AG04449 (cell line): ENCODE measurements at regions of chr2 and their contacts with region 1.

Region 1: DNA sequence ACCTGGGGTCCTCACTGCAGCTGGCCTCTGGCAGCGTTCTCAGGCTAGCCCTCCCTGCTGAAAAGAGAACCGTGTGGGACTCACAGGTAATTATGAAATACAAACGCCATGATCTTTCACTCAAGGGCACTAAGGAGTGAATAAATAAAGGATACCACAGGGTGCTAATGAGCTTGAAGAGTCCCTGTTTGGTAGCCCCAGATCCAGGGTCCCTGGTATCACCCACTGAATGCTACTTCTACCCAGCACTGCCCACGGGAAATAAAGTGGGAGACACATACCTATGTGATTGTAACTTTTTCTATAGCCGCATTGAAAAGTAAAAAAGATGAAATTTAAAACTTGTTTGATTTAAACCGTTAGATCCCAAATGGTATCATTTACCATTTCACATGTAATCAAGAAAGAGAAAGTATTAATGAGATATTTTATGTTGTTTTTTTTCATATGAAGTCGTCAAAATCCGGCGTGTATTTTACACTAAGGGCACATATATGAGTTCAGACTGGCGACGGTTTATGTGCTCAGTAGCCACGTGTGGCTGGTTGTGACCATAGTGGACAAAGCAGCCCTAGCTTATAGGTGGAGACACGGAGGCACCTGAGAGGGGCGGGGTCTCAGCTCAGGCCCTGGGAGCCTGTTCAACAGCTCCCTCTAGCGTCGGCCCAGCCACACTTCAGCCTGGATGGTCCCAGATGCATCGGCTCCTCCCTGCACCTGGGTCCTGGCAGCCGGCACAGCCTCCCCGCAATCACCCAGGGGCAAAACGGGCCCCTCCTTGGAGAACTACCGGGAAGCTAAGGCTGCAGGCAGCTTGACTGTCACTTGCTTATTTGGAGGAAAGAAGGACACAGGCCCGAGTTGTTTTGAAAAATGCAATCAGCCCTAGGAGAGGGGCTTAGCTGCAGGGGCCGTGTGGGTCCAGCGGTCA is 39.2 kb downstream of the ODC1 start:
- DNase-seq: no peak
- H3K4me3 ChIP-seq: no peak overlapping the region
- CTCF ChIP-seq: peak; percentile 98

Region 2: GRCh38 chr2:10079234-10079869 is 329.6 kb before region 1 on chr2:
- CTCF ChIA-PET with region 1: interaction called, 65 read pairs
- POLR2A ChIA-PET with region 1: no interaction called
- DNase-seq: no peak
- H3K4me3 ChIP-seq: peak overlapping the region; percentile 45
- CTCF ChIP-seq: no peak

Region 3: GRCh38 chr2:10129490-10129889 is 279.4 kb before region 1 on chr2:
- CTCF ChIA-PET with region 1: interaction called, 162 read pairs
- POLR2A ChIA-PET with region 1: no interaction called
- DNase-seq: no peak
- H3K4me3 ChIP-seq: no peak overlapping the region
- CTCF ChIP-seq: no peak

Region 4: GRCh38 chr2:10170256-10170655 is 238.7 kb before region 1 on chr2:
- CTCF ChIA-PET with region 1: interaction called, 13 read pairs
- POLR2A ChIA-PET with region 1: no interaction called
- DNase-seq: no peak
- H3K4me3 ChIP-seq: no peak overlapping the region
- CTCF ChIP-seq: no peak

Region 5: GRCh38 chr2:10302479-10303180 is 106.3 kb before region 1 on chr2 and contains the start of gene HPCAL1:
- CTCF ChIA-PET with region 1: interaction called, 10 read pairs
- POLR2A ChIA-PET with region 1: no interaction called
- DNase-seq: no peak
- H3K4me3 ChIP-seq: peak within 1 kb of the TSS; percentile 69
- CTCF ChIP-seq: peak; percentile 54

Region 6: GRCh38 chr2:10397878-10398277 is 11.0 kb before region 1 on chr2:
- CTCF ChIA-PET with region 1: interaction called, 61 read pairs
- POLR2A ChIA-PET with region 1: no interaction called
- DNase-seq: no peak
- H3K4me3 ChIP-seq: no peak overlapping the region
- CTCF ChIP-seq: no peak

Region 7: DNA sequence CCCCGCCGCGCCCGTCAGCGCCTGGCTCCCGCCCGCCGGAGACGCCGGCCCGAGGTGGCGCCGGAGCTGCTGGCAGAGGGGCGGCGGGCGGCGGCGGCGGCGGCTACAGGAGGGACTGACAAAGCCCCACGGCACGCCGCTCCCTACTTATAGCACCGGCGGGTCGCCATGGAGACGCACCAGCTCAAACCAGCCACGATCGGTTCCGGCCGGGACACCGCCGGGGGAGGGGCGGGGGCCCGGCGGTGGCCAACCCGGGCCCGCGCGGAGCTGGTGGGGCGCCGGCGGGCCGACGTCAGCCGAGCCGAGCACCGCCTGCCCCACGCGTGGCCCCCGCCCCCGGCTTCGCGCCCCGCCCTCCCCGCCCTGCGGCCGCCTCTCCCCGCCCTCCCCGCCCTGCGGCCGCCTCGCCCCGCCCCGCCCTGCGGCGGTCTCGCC is 39.3 kb after region 1 on chr2 and contains the start of gene ODC1:
- CTCF ChIA-PET with region 1: interaction called, 10 read pairs
- POLR2A ChIA-PET with region 1: no interaction called
- DNase-seq: peak; percentile 31
- H3K4me3 ChIP-seq: peak within 1 kb of the TSS; percentile 72
- CTCF ChIP-seq: no peak